WTC11 (cell line): ENCODE measurements at regions of chr3 and their contacts with region 1.

Region 1: DNA sequence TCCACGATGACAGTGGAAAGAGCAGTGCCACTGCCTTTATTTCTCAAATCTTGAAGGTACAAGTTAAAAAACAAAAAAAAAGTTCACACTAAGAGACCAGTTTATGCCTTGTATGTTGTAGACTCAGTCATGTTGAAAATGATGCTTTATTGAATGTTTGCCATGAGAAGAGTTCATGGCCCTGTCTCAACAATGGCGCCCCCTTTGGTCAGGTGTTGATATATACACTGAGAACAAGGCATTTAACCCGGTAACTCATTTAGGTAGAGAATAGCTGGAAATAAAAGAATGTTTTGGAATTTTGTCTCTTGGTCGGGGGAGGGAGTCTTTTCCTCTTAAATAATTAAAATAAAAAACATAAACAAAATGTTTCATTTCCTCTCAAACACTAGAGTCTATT is 145.6 kb upstream of the SLC2A2 start:
- DNase-seq: peak; percentile 38
- ATAC-seq: peak; percentile 16; the same call in 1 of the 2 replicates
- H3K4me3 Mint-ChIP-seq: no peak overlapping the region
- H3K27ac Mint-ChIP-seq: no peak overlapping the region
- H3K4me1 Mint-ChIP-seq: peaks cover 32% of the 10 kb centered on the region
- H3K27me3 Mint-ChIP-seq: no peaks in the 10 kb centered on the region
- CTCF ChIP-seq: peak; percentile 53

Region 2: GRCh38 chr3:171132873-171133272 is 39.2 kb before region 1 on chr3:
- CTCF ChIA-PET with region 1: no interaction called
- POLR2A ChIA-PET with region 1: no interaction called
- DNase-seq: no peak
- ATAC-seq: no peak
- H3K4me3 Mint-ChIP-seq: no peak overlapping the region
- H3K27ac Mint-ChIP-seq: no peak overlapping the region
- H3K4me1 Mint-ChIP-seq: no peaks in the 10 kb centered on the region
- H3K27me3 Mint-ChIP-seq: no peaks in the 10 kb centered on the region
- CTCF ChIP-seq: no peak

Region 3: GRCh38 chr3:171187706-171188290 is 15.7 kb after region 1 on chr3:
- CTCF ChIA-PET with region 1: interaction called, 10 read pairs
- POLR2A ChIA-PET with region 1: no interaction called
- DNase-seq: no peak
- ATAC-seq: peak; percentile 85
- H3K4me3 Mint-ChIP-seq: no peak overlapping the region
- H3K27ac Mint-ChIP-seq: no peak overlapping the region
- H3K4me1 Mint-ChIP-seq: peaks cover 32% of the 10 kb centered on the region
- H3K27me3 Mint-ChIP-seq: no peaks in the 10 kb centered on the region
- CTCF ChIP-seq: 0 out of 2 replicates have a peak, but pooled peaks have one; percentile 22